Activated CD4-positive, alpha-beta T cell treated with anti-CD3 and anti-CD28 coated beads for 36 hours (primary cell): ENCODE measurements at regions of chr2 and their contacts with region 1.

Region 1: GRCh38 chr2:50636462-50636861 is 395.5 kb downstream of the NRXN1 start:
- DNase-seq: no peak
- ATAC-seq: no peak
- H3K4me3 Mint-ChIP-seq: no peak overlapping the region
- H3K27ac Mint-ChIP-seq: no peak overlapping the region
- H3K4me1 Mint-ChIP-seq: no peaks in the 10 kb centered on the region
- H3K27me3 Mint-ChIP-seq: no peaks in the 10 kb centered on the region

Region 2: GRCh38 chr2:50596515-50596914 is 39.9 kb before region 1 on chr2:
- CTCF ChIA-PET with region 1: no interaction called
- POLR2A ChIA-PET with region 1: no interaction called
- intact Hi-C with region 1: no loop called
- DNase-seq: no peak
- ATAC-seq: no peak
- H3K4me3 Mint-ChIP-seq: no peak overlapping the region
- H3K27ac Mint-ChIP-seq: no peak overlapping the region
- H3K4me1 Mint-ChIP-seq: no peaks in the 10 kb centered on the region
- H3K27me3 Mint-ChIP-seq: no peaks in the 10 kb centered on the region

Region 3: GRCh38 chr2:50611351-50611871 is 25.1 kb before region 1 on chr2:
- CTCF ChIA-PET with region 1: no interaction called
- POLR2A ChIA-PET with region 1: no interaction called
- intact Hi-C with region 1: loop called in 1 of 2 experiments (anchors 2 kb)
- DNase-seq: no peak
- ATAC-seq: no peak
- H3K4me3 Mint-ChIP-seq: no peak overlapping the region
- H3K27ac Mint-ChIP-seq: no peak overlapping the region
- H3K4me1 Mint-ChIP-seq: no peaks in the 10 kb centered on the region
- H3K27me3 Mint-ChIP-seq: no peaks in the 10 kb centered on the region

Region 4: GRCh38 chr2:50649626-50650402 is 13.4 kb after region 1 on chr2:
- CTCF ChIA-PET with region 1: no interaction called
- POLR2A ChIA-PET with region 1: no interaction called
- intact Hi-C with region 1: no loop called
- DNase-seq: no peak
- ATAC-seq: no peak
- H3K4me3 Mint-ChIP-seq: no peak overlapping the region
- H3K27ac Mint-ChIP-seq: no peak overlapping the region
- H3K4me1 Mint-ChIP-seq: no peaks in the 10 kb centered on the region
- H3K27me3 Mint-ChIP-seq: no peaks in the 10 kb centered on the region